PC-9 (cell line): ENCODE measurements at regions of chr2 and their contacts with region 1.

Region 1: GRCh38 chr2:209525834-209526281 is 102.0 kb downstream of the MAP2 start:
- DNase-seq: peak in 1 of 2 experiments; percentile 35
- H3K4me3 ChIP-seq: no peak overlapping the region
- H3K27ac ChIP-seq: peak overlapping the region; percentile 23; the same call in 1 of the 2 replicates
- H3K4me1 ChIP-seq: peaks cover 11% of the 10 kb centered on the region; the same call in 1 of the 2 replicates
- H3K27me3 ChIP-seq: no peaks in the 10 kb centered on the region
- CTCF ChIP-seq: no peak

Region 2: DNA sequence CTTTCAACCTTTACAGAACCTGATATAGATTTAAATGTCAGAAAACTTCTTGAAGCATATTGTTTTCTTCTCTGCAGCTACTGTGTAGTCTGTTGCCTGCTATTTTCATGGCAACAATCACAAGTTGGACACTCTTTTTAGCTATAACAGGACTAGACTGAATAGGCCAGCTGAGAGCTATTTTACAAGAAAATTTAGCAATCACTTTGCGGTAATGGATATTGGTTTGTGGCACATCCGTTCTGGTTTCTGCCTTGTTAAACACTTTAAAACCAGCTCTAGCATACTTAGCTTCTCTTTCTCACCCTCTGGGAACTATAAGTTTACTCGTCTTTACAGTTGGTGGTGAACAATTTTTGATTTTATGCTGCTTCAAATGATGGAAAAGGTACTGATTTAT is 23.7 kb after region 1 on chr2:
- CTCF ChIA-PET with region 1: no interaction called
- POLR2A ChIA-PET with region 1: no interaction called
- intact Hi-C with region 1: loop called (anchors 1 kb)
- DNase-seq: no peak
- H3K4me3 ChIP-seq: no peak overlapping the region
- H3K27ac ChIP-seq: no peak overlapping the region
- H3K4me1 ChIP-seq: no peaks in the 10 kb centered on the region
- H3K27me3 ChIP-seq: no peaks in the 10 kb centered on the region
- CTCF ChIP-seq: no peak